B cell (primary cell): ENCODE measurements at regions of chr3 and their contacts with region 1.

Region 1: GRCh38 chr3:82133070-82133606 is 371.7 kb upstream of the GBE1 start:
- DNase-seq: peak; percentile 51
- ATAC-seq: peak; percentile 60
- H3K4me3 ChIP-seq: no peak overlapping the region
- H3K4me3 Mint-ChIP-seq: no peak overlapping the region
- H3K27ac ChIP-seq: no peak overlapping the region
- H3K27ac Mint-ChIP-seq: no peak overlapping the region
- H3K4me1 ChIP-seq: peaks cover 6 to 9% of the 10 kb centered on the region in 2 donors
- H3K4me1 Mint-ChIP-seq: peaks cover 13% of the 10 kb centered on the region
- H3K27me3 ChIP-seq: no peaks in the 10 kb centered on the region
- H3K27me3 Mint-ChIP-seq: no peaks in the 10 kb centered on the region
- CTCF ChIP-seq: peak; percentile 91

Region 2: GRCh38 chr3:81041331-81041730 is 1091.8 kb before region 1 on chr3:
- CTCF ChIA-PET with region 1: no interaction called
- POLR2A ChIA-PET with region 1: no interaction called
- intact Hi-C with region 1: no loop called
- DNase-seq: no peak
- ATAC-seq: no peak
- H3K4me3 ChIP-seq: no peak overlapping the region
- H3K4me3 Mint-ChIP-seq: no peak overlapping the region
- H3K27ac ChIP-seq: no peak overlapping the region
- H3K27ac Mint-ChIP-seq: no peak overlapping the region
- H3K4me1 ChIP-seq: no peaks in the 10 kb centered on the region
- H3K4me1 Mint-ChIP-seq: no peaks in the 10 kb centered on the region
- H3K27me3 ChIP-seq: no peaks in the 10 kb centered on the region
- H3K27me3 Mint-ChIP-seq: no peaks in the 10 kb centered on the region
- CTCF ChIP-seq: no peak

Region 3: DNA sequence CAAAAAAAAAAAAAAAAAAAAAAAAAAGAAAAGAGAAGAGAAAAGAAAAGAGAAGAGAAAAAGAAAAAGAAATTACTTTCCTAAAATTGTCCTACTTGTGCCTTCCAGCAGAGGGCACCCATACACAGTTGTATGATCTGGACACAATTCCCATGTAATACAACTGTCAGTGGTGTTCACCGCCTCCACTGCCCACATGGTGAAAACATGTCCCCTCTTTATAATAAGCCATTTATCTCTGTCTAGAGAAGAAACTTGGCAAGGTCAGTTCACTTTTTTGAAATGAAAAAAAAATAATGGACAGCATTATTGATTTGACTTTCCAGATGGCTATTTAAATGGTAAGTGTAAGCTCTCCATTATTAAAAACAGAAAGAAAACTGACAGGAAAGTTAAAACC is 831.1 kb before region 1 on chr3:
- CTCF ChIA-PET with region 1: no interaction called
- POLR2A ChIA-PET with region 1: no interaction called
- intact Hi-C with region 1: loop called (anchors 5 kb)
- DNase-seq: peak; percentile 8
- ATAC-seq: no peak
- H3K4me3 ChIP-seq: no peak overlapping the region
- H3K4me3 Mint-ChIP-seq: no peak overlapping the region
- H3K27ac ChIP-seq: no peak overlapping the region
- H3K27ac Mint-ChIP-seq: no peak overlapping the region
- H3K4me1 ChIP-seq: no peaks in the 10 kb centered on the region
- H3K4me1 Mint-ChIP-seq: no peaks in the 10 kb centered on the region
- H3K27me3 ChIP-seq: no peaks in the 10 kb centered on the region
- H3K27me3 Mint-ChIP-seq: no peaks in the 10 kb centered on the region
- CTCF ChIP-seq: peak; percentile 73

Region 4: DNA sequence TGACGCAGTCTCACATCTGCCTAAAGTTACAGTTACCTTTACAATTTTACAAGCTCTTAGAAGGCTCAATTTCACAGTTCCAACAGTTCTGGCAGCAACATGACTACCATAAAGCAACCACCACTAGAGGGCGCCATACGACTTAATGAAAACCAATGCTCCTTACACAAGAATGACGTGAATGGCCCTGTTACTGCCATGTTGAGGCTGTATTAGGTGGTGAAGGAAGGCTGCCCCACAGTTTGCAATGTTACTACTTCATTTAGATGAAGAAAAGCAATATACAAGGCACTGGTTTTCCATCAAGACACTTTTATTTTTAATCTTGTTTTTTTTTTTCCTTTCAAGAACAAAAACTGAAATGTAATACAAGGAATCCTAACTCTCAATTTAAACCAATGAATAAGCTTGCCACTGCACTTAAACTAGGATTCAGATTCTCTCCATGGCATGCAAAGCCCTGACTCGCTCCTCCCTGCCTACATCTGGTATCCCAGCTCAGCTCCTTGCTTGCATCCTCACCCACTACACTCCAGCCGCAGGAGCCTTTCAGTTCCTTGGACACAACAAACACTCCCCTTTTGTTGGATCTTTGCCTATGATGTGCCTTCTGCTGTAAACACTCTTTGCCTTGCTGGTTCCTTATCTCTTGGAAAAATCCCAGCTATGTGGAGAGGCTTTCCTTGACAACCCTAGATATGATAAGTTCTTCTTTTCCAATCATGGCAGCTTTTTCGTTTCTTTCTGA is 642.4 kb before region 1 on chr3:
- CTCF ChIA-PET with region 1: interaction called, 33 read pairs
- POLR2A ChIA-PET with region 1: no interaction called
- intact Hi-C with region 1: no loop called
- DNase-seq: peak; percentile 70
- ATAC-seq: peak; percentile 62
- H3K4me3 ChIP-seq: no peak overlapping the region
- H3K4me3 Mint-ChIP-seq: no peak overlapping the region
- H3K27ac ChIP-seq: no peak overlapping the region
- H3K27ac Mint-ChIP-seq: no peak overlapping the region
- H3K4me1 ChIP-seq: peaks cover 2% of the 10 kb centered on the region in 2 donors
- H3K4me1 Mint-ChIP-seq: peaks cover 3% of the 10 kb centered on the region
- H3K27me3 ChIP-seq: no peaks in the 10 kb centered on the region
- H3K27me3 Mint-ChIP-seq: no peaks in the 10 kb centered on the region
- CTCF ChIP-seq: peak; percentile 96

Region 5: DNA sequence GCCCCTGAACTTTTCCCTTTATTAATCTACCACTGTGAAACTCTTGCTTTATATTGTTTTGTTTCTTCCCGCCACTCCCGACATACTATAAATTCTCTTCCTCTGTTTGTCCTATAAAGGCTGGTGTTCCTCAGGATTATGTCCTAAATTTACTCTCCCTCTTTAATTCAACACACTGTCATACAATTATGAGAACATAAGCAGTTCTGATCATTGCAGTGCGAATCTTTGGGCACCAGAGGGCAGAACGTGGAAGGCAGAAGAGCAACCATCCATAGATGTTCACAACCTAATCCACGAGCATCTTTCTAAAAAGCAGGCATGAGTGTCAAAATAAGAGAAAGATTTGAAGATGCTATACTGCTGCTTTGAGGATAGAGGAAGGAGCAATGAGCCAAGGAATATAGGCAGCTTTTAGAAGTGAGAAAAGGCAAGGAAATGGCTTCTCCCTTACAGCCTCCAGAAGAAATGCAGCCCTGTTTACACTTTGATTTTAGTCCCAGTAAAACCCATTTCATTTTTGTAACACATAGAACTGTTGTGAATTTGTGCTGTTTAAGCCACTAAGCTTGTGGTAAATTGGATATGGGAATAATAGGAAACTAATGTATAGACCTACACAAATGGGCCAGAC is 551.1 kb before region 1 on chr3:
- CTCF ChIA-PET with region 1: no interaction called
- POLR2A ChIA-PET with region 1: no interaction called
- intact Hi-C with region 1: loop called (anchors 2 kb)
- DNase-seq: peak; percentile 10
- ATAC-seq: no peak
- H3K4me3 ChIP-seq: no peak overlapping the region
- H3K4me3 Mint-ChIP-seq: no peak overlapping the region
- H3K27ac ChIP-seq: no peak overlapping the region
- H3K27ac Mint-ChIP-seq: no peak overlapping the region
- H3K4me1 ChIP-seq: no peaks in the 10 kb centered on the region
- H3K4me1 Mint-ChIP-seq: no peaks in the 10 kb centered on the region
- H3K27me3 ChIP-seq: no peaks in the 10 kb centered on the region
- H3K27me3 Mint-ChIP-seq: no peaks in the 10 kb centered on the region
- CTCF ChIP-seq: peak; percentile 70

Region 6: GRCh38 chr3:81666493-81667121 is 466.5 kb before region 1 on chr3:
- CTCF ChIA-PET with region 1: interaction called, 23 read pairs
- POLR2A ChIA-PET with region 1: no interaction called
- intact Hi-C with region 1: no loop called
- DNase-seq: peak; percentile 8
- ATAC-seq: no peak
- H3K4me3 ChIP-seq: no peak overlapping the region
- H3K4me3 Mint-ChIP-seq: no peak overlapping the region
- H3K27ac ChIP-seq: no peak overlapping the region
- H3K27ac Mint-ChIP-seq: no peak overlapping the region
- H3K4me1 ChIP-seq: no peaks in the 10 kb centered on the region
- H3K4me1 Mint-ChIP-seq: no peaks in the 10 kb centered on the region
- H3K27me3 ChIP-seq: no peaks in the 10 kb centered on the region
- H3K27me3 Mint-ChIP-seq: no peaks in the 10 kb centered on the region
- CTCF ChIP-seq: peak; percentile 72